ENCODE measurements at regions of chr14 and their contacts with region 1.

Region 1: GRCh38 chr14:77376771-77377501 is at the starts of genes SAMD15 and TMED8:
- DNase-seq: peak; percentile 83 to 97
- H3K4me3 ChIP-seq: peak within 1 kb of the TSS; percentile 82
- H3K27ac ChIP-seq: peak within 1 kb of the TSS; percentile 40
- H3K4me1 ChIP-seq: peaks cover 19% of the 10 kb centered on the region
- H3K27me3 ChIP-seq: no peaks in the 10 kb centered on the region
- CTCF ChIP-seq: peak; percentile 46; the same call in 1 of the 2 replicates
- total RNA-seq, gene SAMD15: 4.8 and 7.8 TPM in 2 replicates
- total RNA-seq, gene TMED8: 32.1 and 42.6 TPM in 2 replicates

Region 2: DNA sequence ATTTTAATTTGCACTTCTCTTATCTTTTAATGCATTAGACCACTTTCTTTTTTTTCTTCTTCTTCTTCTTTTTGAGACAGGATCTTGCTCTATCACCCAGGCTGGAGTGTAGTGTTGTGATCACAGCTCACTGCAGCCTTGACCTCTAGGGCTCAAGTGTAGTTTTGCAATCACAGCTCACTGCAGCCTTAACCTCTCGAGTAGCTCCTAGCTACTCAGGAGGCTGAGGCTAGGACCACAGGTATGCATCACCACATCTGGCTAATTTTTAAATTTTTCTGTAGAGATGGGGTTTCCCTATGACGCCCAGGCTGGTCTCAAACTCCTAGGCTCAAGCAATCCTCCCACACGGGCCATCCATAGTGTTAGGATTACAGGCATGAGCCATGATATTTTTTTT is 12.8 kb before region 1 on chr14:
- CTCF ChIA-PET with region 1: no interaction called
- POLR2A ChIA-PET with region 1: interaction called, 19 read pairs
- intact Hi-C with region 1: no loop called
- DNase-seq: no peak
- H3K4me3 ChIP-seq: no peak overlapping the region
- H3K27ac ChIP-seq: no peak overlapping the region
- H3K4me1 ChIP-seq: no peaks in the 10 kb centered on the region
- H3K27me3 ChIP-seq: no peaks in the 10 kb centered on the region
- CTCF ChIP-seq: no peak

Region 3: GRCh38 chr14:77593501-77593961 is 216.6 kb after region 1 on chr14:
- CTCF ChIA-PET with region 1: no interaction called
- POLR2A ChIA-PET with region 1: interaction called, 10 read pairs
- intact Hi-C with region 1: no loop called
- DNase-seq: peak in 1 of 2 experiments; percentile 99
- H3K4me3 ChIP-seq: peak overlapping the region; percentile 5; the same call in 1 of the 2 replicates
- H3K27ac ChIP-seq: peak overlapping the region; percentile 77
- H3K4me1 ChIP-seq: peaks cover 53% of the 10 kb centered on the region
- H3K27me3 ChIP-seq: no peaks in the 10 kb centered on the region
- CTCF ChIP-seq: no peak

Measured in PC-9 (cell line).